ENCODE measurements at regions of chr5 and their contacts with region 1.

Region 1: GRCh38 chr5:140244525-140245025 is 58.3 kb downstream of the PFDN1 start:
- DNase-seq: peak; percentile 92
- H3K4me3 ChIP-seq: no peak overlapping the region
- H3K27ac ChIP-seq: no peak overlapping the region
- H3K4me1 ChIP-seq: peaks cover 26% of the 10 kb centered on the region
- H3K27me3 ChIP-seq: no peaks in the 10 kb centered on the region
- CTCF ChIP-seq: peak; percentile 88

Region 2: DNA sequence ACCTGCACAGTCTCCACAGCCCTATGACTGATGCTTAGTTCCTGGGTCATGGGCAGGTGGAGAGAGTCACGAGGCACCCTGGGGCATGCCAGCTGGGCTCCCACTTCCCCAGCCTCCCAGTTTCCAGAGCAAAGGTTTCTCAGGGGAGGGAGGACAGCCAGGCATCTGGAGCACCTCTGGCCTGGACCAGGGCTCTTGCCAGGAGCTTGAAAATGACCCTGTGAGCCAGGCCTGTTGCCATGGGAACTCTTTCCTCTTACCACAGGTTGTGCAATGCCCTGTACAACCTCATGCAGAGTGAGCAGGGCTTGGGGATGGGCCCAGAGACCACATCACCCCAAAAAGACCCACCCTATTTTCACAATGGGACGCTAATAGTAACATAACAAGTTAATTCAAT is 335.8 kb before region 1 on chr5:
- CTCF ChIA-PET with region 1: no interaction called
- POLR2A ChIA-PET with region 1: no interaction called
- intact Hi-C with region 1: no loop called
- DNase-seq: no peak
- H3K4me3 ChIP-seq: no peak overlapping the region
- H3K27ac ChIP-seq: no peak overlapping the region
- H3K4me1 ChIP-seq: peaks cover 9% of the 10 kb centered on the region
- H3K27me3 ChIP-seq: peaks cover 19% of the 10 kb centered on the region
- CTCF ChIP-seq: no peak

Region 3: DNA sequence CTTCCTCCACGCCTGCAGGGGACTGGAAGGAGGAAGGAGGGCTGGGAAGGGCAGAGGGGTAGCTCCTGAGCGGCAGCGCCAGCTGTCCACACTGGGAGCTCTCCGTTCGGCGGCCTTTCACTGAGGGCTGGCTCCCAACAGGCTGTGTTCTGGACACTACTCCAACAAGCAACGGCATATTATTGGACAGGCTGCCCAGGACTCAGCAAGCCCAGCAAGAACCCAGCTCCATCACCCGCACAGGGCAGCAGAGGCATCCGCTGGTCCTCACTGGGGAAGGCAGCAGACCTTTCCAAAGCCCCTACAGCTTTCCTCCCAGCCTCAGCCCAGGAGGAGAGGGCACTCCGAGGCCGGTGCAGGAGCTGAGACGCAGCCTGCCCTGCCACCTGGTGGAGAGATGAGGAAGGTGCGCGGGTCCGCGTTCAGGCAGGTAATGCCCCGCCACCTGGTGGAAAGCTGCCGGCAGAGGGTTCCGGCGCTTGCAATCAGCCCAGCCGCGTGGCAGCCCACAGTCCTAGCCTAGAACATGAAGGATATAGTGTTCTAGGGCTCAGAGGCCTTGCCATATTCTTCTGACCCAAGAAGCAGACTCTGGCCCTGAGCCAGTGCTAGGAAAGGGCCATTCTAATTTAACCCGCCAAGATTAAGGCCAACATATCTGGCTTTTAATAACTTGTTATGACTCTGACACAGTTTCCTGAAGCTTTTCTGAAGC is 275.9 kb before region 1 on chr5:
- CTCF ChIA-PET with region 1: no interaction called
- POLR2A ChIA-PET with region 1: no interaction called
- intact Hi-C with region 1: no loop called
- DNase-seq: peak; percentile 86
- H3K4me3 ChIP-seq: no peak overlapping the region
- H3K27ac ChIP-seq: no peak overlapping the region
- H3K4me1 ChIP-seq: no peaks in the 10 kb centered on the region
- H3K27me3 ChIP-seq: no peaks in the 10 kb centered on the region
- CTCF ChIP-seq: peak; percentile 100

Region 4: DNA sequence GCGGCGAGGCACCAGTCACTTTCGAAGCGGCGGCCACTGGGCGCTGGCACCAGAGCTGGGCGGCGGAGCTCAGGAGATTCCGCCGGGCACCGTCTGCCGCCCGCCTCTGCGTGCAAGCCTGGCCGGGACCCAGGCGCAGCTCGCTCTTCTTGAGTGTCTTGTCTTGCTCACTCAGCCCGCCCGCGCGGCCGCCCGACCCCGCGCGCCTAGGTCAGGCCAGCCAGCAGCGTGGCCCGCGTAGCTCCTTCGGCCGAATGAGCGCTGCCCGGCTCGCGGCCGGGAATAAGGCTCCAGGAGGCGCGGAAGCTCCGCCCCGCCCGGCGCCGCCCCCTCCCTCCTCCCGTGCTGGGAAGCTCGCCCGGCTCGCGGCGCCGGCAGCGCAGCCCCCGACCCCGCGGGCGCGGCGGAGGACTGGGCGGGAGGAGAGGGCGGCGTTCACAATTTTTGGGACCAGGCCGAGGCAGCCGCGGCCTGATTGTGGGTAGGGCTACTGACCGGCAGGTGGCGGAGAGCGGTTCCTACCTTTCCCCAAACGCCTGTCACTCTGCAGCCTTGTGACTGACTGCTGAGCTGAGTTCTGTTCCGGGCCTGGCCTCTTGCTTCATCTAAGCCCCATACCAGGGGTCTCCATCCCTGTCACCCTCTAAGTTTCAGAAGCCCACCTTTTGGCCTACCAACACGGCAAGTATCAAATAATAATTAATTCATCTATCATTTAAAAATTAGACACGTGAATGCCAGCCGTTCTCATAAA is 102.0 kb after region 1 on chr5 and contains the start of gene HBEGF:
- CTCF ChIA-PET with region 1: interaction called, 70 read pairs
- POLR2A ChIA-PET with region 1: no interaction called
- intact Hi-C with region 1: loop called (anchors 1 kb)
- DNase-seq: peak; percentile 70
- H3K4me3 ChIP-seq: peak within 1 kb of the TSS; percentile 76
- H3K27ac ChIP-seq: peak within 1 kb of the TSS; percentile 57
- H3K4me1 ChIP-seq: peaks cover 34% of the 10 kb centered on the region
- H3K27me3 ChIP-seq: no peaks in the 10 kb centered on the region
- CTCF ChIP-seq: peak; percentile 37; the same call in 1 of the 2 replicates
- total RNA-seq, gene HBEGF: 12.0 and 14.7 TPM in 2 replicates

Region 5: DNA sequence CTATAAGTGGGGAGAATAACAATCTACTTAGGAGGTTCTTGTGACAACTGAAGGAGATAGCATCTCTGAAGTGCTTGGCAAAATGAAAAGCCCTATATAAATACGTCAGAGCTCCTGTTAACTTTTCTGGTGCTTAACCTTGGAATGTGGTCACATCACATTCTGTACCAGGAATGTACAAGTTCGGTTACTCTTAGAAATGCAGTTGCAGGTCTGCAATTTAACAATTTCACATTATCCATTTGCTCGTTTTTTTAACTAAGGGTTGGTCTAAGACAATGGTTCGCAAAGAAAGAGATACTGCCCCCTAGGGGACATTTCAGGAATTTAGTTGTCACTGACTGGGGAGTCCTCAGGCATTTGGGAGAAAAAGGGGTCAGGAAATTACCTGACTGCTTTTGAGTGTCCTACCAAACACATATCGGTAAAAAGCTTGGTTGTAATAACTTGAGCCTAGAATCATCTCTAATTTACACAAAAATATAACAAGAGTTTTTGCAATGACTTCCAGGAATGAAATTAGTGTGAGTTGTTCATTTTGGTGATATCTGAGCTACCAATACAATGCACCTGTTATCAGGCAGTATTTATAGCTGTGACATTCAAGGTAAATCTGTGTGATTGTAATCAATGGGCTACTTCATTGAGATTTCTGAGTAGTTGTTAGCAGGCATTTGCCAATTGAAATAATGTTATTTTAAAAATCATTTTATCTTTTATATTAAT is 107.2 kb after region 1 on chr5:
- CTCF ChIA-PET with region 1: interaction called, 70 read pairs
- POLR2A ChIA-PET with region 1: no interaction called
- intact Hi-C with region 1: loop called (anchors 1 kb)
- DNase-seq: peak; percentile 84
- H3K4me3 ChIP-seq: no peak overlapping the region
- H3K27ac ChIP-seq: no peak overlapping the region
- H3K4me1 ChIP-seq: peaks cover 7% of the 10 kb centered on the region
- H3K27me3 ChIP-seq: no peaks in the 10 kb centered on the region
- CTCF ChIP-seq: peak; percentile 91

Region 6: GRCh38 chr5:140357726-140358093 is 113.1 kb after region 1 on chr5:
- CTCF ChIA-PET with region 1: interaction called, 70 read pairs
- POLR2A ChIA-PET with region 1: no interaction called
- intact Hi-C with region 1: loop called (anchors 1 kb)
- DNase-seq: peak; percentile 88
- H3K4me3 ChIP-seq: peak overlapping the region; percentile 19
- H3K27ac ChIP-seq: no peak overlapping the region
- H3K4me1 ChIP-seq: peaks cover 3% of the 10 kb centered on the region
- H3K27me3 ChIP-seq: no peaks in the 10 kb centered on the region
- CTCF ChIP-seq: peak; percentile 96

Region 7: GRCh38 chr5:140710899-140711552 is 466.5 kb after region 1 on chr5:
- CTCF ChIA-PET with region 1: no interaction called
- POLR2A ChIA-PET with region 1: no interaction called
- intact Hi-C with region 1: loop called (anchors 5 kb)
- DNase-seq: peak; percentile 98
- H3K4me3 ChIP-seq: peak overlapping the region; percentile 66
- H3K27ac ChIP-seq: peak overlapping the region; percentile 91
- H3K4me1 ChIP-seq: no peaks in the 10 kb centered on the region
- H3K27me3 ChIP-seq: no peaks in the 10 kb centered on the region
- CTCF ChIP-seq: no peak

Measured in A673 (cell line).